ENCODE measurements at regions of chr20 and their contacts with region 1.

Region 1: GRCh38 chr20:36135159-36135558 is 19.4 kb upstream of the EPB41L1 start:
- DNase-seq: no peak
- H3K4me3 Mint-ChIP-seq: no peak overlapping the region
- H3K27ac Mint-ChIP-seq: no peak overlapping the region
- H3K4me1 Mint-ChIP-seq: peaks cover 4% of the 10 kb centered on the region
- H3K27me3 Mint-ChIP-seq: no peaks in the 10 kb centered on the region
- CTCF ChIP-seq: no peak

Region 2: DNA sequence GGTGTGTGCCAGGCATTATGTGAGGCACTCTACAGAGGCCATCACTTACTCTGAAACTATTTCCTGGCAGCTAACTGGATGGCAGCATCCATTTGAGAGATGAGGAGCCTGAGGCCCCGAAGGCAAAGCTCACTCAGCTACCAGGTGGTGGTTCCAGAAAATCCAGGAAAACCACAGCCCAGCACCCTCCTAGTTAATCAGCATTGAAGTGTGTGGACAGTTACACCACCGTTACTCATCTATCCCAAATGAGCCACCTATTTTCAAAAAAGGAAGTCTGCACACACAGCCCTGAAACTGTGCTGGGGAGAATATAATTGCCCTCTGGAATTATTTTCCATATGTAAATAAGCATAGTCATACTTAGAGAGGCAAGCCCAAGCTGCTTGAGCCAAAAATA is 99.4 kb before region 1 on chr20:
- CTCF ChIA-PET with region 1: interaction called, 5 read pairs
- POLR2A ChIA-PET with region 1: interaction called, 3 read pairs
- intact Hi-C with region 1: loop called (anchors 5 kb)
- DNase-seq: peak; percentile 67
- H3K4me3 Mint-ChIP-seq: no peak overlapping the region
- H3K27ac Mint-ChIP-seq: no peak overlapping the region
- H3K4me1 Mint-ChIP-seq: no peaks in the 10 kb centered on the region
- H3K27me3 Mint-ChIP-seq: no peaks in the 10 kb centered on the region
- CTCF ChIP-seq: no peak